ENCODE measurements at regions of chr11 and their contacts with region 1.

Region 1: GRCh38 chr11:6481012-6481923 is at the starts of genes ARFIP2 and TIMM10B:
- DNase-seq: peak; percentile 97 to 99
- ATAC-seq: peak; percentile 97 to 99
- H3K4me3 ChIP-seq: peak within 1 kb of the TSS; percentile 90
- H3K27ac ChIP-seq: peak within 1 kb of the TSS; percentile 86 to 94
- H3K4me1 ChIP-seq: peaks cover 25% of the 10 kb centered on the region
- CTCF ChIP-seq: no peak
- EP300 ChIP-seq: no peak
- POLR2A ChIP-seq: peak; percentile 86
- RAD21 ChIP-seq: no peak
- polyA plus RNA-seq, gene ARFIP2: 87.9 and 88.5 TPM in 2 replicates
- polyA plus RNA-seq, gene TIMM10B: 31.6 and 35.6 TPM in 2 replicates

Region 2: GRCh38 chr11:6389921-6390724 is 91.1 kb before region 1 on chr11 and contains the start of gene SMPD1:
- CTCF ChIA-PET with region 1: no interaction called
- POLR2A ChIA-PET with region 1: interaction called, 13 read pairs
- DNase-seq: peak; percentile 82
- ATAC-seq: peak; percentile 90 to 94
- H3K4me3 ChIP-seq: peak within 1 kb of the TSS; percentile 51
- H3K27ac ChIP-seq: peak within 1 kb of the TSS; percentile 77 to 87
- H3K4me1 ChIP-seq: peaks cover 32% of the 10 kb centered on the region
- CTCF ChIP-seq: no peak
- EP300 ChIP-seq: no peak
- POLR2A ChIP-seq: 0 out of 2 replicates have a peak, but pooled peaks have one; percentile 31
- RAD21 ChIP-seq: no peak
- polyA plus RNA-seq, gene SMPD1: 5.1 and 5.5 TPM in 2 replicates

Region 3: DNA sequence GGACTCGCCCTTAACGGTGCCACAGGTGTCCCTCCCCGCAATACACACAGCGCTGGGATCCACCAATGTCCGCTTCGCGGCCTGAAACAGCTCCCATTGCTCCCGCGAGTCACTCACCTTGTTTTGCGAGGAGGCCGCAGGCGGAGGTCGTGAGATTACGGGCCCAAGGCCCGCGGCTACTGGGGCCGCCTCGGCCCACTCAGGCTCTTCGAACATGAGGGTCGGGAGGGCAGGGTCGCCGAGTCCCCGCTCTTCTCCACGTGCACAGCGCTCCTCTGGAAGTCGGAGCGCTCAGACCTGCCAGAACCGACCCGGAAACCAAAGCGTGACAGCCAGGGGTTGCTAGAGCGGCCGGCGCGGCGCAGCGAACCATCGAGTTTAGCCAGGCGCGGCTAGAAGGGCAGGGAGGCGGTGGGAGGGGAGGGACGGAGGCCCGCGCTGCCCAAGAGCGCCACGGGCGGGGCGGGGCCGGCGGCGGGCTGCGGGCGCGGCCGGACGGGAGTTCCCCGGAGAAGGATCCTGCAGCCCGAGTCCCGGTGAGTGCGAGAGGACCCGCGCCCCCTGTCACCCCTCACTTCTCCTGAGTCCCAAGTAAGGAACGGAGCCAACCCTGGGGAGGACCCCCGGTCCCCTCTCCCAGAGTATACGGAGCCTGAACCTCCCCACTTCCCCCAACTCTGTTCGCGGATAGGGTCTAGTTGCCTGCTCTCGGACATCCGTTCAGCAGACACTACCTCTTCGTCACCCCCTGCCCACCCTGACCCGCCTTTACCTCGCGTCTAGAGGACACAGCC is 122.2 kb after region 1 on chr11 and contains the starts of genes ILK and RRP8:
- CTCF ChIA-PET with region 1: interaction called, 3 read pairs
- POLR2A ChIA-PET with region 1: interaction called, 10 read pairs
- DNase-seq: peak; percentile 91 to 92
- ATAC-seq: peak; percentile 80 to 90
- H3K4me3 ChIP-seq: peak within 1 kb of the TSS; percentile 79
- H3K27ac ChIP-seq: peak within 1 kb of the TSS; percentile 90 to 98
- H3K4me1 ChIP-seq: peaks cover 39% of the 10 kb centered on the region
- CTCF ChIP-seq: no peak
- EP300 ChIP-seq: no peak
- POLR2A ChIP-seq: peak; percentile 58
- RAD21 ChIP-seq: no peak
- polyA plus RNA-seq, gene ILK: 109 and 120 TPM in 2 replicates
- polyA plus RNA-seq, gene RRP8: 20.5 and 25.9 TPM in 2 replicates

Measured in A549 (cell line).